ENCODE measurements at regions of chr17 and their contacts with region 1.

Region 1: DNA sequence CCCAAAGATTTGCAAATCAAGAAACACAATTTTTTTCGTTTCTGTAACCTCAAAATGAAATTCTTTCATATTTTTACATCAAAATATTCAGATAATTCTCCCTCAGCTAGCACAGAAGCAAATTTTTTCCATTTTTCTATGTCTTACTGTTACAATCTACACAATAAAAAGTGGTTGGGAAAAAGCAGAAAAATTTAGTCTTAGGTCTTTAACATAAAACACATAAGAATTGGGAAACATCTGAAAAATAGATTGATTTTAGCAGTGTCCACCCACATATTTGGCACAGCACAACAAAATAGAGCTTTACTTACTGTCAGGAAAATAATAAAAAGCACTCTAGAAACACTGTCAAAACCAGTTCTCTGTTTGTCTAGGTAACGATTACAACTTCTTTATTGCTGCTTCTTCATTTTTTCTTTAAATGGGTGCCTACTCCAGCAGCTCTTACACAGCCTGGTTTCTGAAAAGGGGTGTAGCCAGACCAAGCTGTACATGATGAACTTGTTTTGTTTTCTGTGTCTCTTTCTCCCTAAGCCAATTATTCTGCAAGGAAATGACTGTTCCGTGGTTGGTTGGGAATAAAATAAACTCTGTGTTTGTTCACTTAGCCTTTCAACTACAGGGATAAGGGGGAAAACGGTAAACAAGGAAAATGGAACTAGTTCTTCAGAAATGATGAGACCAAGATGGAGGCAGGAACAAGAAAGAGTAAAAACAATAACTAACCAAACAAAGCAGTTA is at the start of gene ABCA6:
- DNase-seq: peak in 1 of 4 experiments; percentile 23
- ATAC-seq: peak; percentile 89
- H3K4me3 ChIP-seq: no peak within 1 kb of the TSS
- H3K27ac ChIP-seq: peak within 1 kb of the TSS; percentile 14; the same call in 2 of the 3 replicates
- H3K4me1 ChIP-seq: no peaks in the 10 kb centered on the region; a peak in 2 of 5 replicates
- H3K27me3 ChIP-seq: no peaks in the 10 kb centered on the region
- CTCF ChIP-seq: no peak
- EP300 ChIP-seq: no peak
- POLR2A ChIP-seq: no peak
- RAD21 ChIP-seq: no peak
- polyA plus RNA-seq, gene ABCA6: 0.08 to 0.15 TPM

Region 2: DNA sequence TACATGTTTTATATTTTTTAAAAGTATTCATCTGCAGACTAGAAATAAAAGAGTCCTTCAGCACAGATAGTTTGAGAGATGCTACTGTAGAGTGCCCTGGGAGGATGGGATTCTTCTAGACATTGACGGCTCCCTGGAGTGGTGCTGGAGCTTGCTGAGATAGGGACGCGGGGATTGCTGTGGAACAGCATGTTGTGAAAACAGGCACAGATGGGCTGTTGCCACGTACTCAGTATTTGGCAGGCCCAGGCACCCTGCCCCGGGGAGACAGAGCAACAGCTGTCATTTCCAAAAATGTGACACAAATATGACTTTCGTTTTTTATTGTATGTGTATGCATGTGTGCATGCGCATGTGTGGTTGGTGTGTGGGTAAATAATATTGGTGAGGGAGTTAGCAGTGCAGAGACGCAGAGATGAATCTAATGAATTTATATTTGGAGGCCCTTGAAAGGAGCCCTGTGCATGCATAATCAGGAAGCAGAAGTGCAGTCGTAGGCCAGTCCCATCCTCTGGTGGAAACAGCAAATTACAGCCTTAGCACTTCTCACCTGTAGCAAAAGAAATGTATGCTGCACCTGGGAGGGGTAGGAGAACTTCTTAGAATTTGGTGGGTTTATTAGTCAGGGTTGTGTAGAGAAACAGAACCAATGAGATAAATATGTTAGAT is 180.3 kb before region 1 on chr17:
- CTCF ChIA-PET with region 1: no interaction called
- POLR2A ChIA-PET with region 1: no interaction called
- in situ Hi-C with region 1: no loop called
- intact Hi-C with region 1: no loop called
- DNase-seq: no peak
- ATAC-seq: no peak
- H3K4me3 ChIP-seq: no peak overlapping the region
- H3K27ac ChIP-seq: no peak overlapping the region
- H3K4me1 ChIP-seq: no peaks in the 10 kb centered on the region; a peak in 1 of 5 replicates
- H3K27me3 ChIP-seq: no peaks in the 10 kb centered on the region
- CTCF ChIP-seq: no peak
- EP300 ChIP-seq: no peak
- POLR2A ChIP-seq: no peak
- RAD21 ChIP-seq: no peak

Region 3: GRCh38 chr17:69084911-69085310 is 56.7 kb before region 1 on chr17:
- CTCF ChIA-PET with region 1: no interaction called
- POLR2A ChIA-PET with region 1: no interaction called
- in situ Hi-C with region 1: no loop called
- intact Hi-C with region 1: no loop called
- DNase-seq: peak in 2 of 4 experiments; percentile 22 to 23
- ATAC-seq: peak; percentile 76
- H3K4me3 ChIP-seq: no peak overlapping the region
- H3K27ac ChIP-seq: no peak overlapping the region
- H3K4me1 ChIP-seq: peaks cover 0 to 2% of the 10 kb centered on the region in 2 experiments; a peak in 2 of 5 replicates
- H3K27me3 ChIP-seq: no peaks in the 10 kb centered on the region
- CTCF ChIP-seq: peak; percentile 25 to 48 (median 47); a peak in 5 of 6 replicates
- EP300 ChIP-seq: no peak
- POLR2A ChIP-seq: no peak
- RAD21 ChIP-seq: no peak

Region 4: GRCh38 chr17:69103557-69104233 is 37.9 kb before region 1 on chr17:
- CTCF ChIA-PET with region 1: no interaction called
- POLR2A ChIA-PET with region 1: interaction called, 3 read pairs
- in situ Hi-C with region 1: no loop called
- intact Hi-C with region 1: loop called (anchors 5 kb)
- DNase-seq: peak; percentile 73 to 94 (median 78)
- ATAC-seq: peak; percentile 92
- H3K4me3 ChIP-seq: 0 out of 2 replicates have a peak overlapping the region, but pooled peaks have one; percentile 9
- H3K27ac ChIP-seq: peak overlapping the region; percentile 83
- H3K4me1 ChIP-seq: peaks cover 13 to 35% of the 10 kb centered on the region in 2 experiments
- H3K27me3 ChIP-seq: no peaks in the 10 kb centered on the region
- CTCF ChIP-seq: no peak
- EP300 ChIP-seq: peak; percentile 94
- POLR2A ChIP-seq: no peak
- RAD21 ChIP-seq: no peak

Measured in K562 (cell line).